MCF 10A (cell line): ENCODE measurements at regions of chr1 and their contacts with region 1.

Region 1: DNA sequence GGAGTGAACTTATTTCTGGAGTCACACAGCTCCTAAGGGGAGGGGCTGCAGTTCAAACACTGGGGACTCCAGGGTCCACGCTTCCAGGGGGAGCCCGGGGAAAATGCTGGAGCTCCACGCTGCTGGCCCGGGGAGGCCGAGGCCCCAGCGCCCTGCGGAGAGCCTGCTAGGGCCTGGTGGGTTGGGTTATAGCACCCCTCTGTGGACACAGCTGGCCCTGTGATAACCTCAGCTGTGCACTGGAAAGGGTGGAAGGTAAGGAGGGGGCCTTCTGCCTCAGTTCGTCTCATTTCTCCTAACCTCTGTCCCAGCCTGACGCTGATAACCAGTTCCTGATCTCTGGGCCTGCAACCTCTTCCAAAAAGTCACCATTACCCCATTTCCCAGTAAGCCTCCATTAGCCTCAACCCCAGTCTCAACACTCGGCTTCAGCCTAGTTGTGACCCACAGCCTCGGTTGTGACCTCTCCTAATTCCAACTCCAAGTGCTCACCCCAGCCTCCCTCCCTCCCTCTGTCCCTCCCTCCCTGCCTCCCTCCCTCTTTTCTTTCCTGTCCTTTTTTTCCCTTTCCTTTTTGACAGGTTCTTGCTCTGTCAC is 7.1 kb downstream of the NBL1 start:
- DNase-seq: no peak
- H3K4me3 Mint-ChIP-seq: no peak overlapping the region
- H3K27ac Mint-ChIP-seq: peak overlapping the region; percentile 75
- H3K4me1 Mint-ChIP-seq: peaks cover 50% of the 10 kb centered on the region
- H3K27me3 Mint-ChIP-seq: no peaks in the 10 kb centered on the region
- CTCF ChIP-seq: peak; percentile 50

Region 2: DNA sequence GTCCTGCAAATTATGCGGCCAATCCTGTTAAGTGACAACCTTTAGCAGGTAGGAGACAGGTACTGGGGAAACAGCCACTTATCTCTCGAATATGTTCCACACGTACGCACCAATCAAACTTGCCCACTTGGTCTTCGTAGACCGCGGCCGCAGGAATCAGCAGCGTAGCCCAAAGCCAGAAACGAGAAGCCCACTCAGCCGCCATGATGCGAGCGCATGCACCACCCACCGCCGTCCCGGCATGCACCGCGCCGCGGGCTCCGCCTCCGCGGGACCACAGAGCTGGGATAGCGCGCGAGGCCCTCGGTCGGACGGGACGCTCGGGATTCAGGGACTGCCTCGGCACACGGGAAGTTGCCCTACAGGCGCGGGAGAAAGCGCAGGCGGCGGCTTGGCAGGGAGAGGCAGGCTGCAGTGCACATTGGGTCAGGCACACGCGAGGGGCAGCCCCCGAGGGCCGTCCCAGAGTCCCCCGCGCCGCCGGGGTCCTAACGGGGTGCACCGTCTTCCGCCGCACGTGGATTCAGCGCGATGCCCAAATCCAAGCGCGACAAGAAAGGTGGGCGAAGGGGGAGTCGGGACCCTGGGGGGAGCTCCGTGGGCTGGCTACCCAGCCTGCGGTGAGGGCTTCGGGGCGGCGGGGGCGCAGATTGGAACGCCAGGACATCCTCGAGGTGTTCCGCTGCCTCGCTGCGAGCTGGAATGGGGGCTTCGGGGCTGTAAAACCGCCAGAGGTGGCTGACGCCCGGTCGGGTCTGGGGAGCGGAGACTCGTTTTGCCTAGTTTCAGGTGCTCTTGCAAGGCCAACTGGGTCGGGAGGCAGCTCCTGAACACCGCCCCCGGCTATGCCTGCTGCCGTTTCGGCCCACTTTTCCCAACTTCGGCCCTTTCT is 399.7 kb before region 1 on chr1 and contains the starts of genes EMC1 and MRTO4:
- CTCF ChIA-PET with region 1: no interaction called
- POLR2A ChIA-PET with region 1: interaction called, 3 read pairs
- intact Hi-C with region 1: loop called (anchors 2 kb)
- DNase-seq: peak; percentile 81
- H3K4me3 Mint-ChIP-seq: peak within 1 kb of the TSS; percentile 95
- H3K27ac Mint-ChIP-seq: peak within 1 kb of the TSS; percentile 85
- H3K4me1 Mint-ChIP-seq: peaks cover 11% of the 10 kb centered on the region
- H3K27me3 Mint-ChIP-seq: no peaks in the 10 kb centered on the region
- CTCF ChIP-seq: no peak
- total RNA-seq, gene EMC1: 75.9 and 77.2 TPM in 2 replicates
- total RNA-seq, gene MRTO4: 37.3 and 46.0 TPM in 2 replicates

Region 3: DNA sequence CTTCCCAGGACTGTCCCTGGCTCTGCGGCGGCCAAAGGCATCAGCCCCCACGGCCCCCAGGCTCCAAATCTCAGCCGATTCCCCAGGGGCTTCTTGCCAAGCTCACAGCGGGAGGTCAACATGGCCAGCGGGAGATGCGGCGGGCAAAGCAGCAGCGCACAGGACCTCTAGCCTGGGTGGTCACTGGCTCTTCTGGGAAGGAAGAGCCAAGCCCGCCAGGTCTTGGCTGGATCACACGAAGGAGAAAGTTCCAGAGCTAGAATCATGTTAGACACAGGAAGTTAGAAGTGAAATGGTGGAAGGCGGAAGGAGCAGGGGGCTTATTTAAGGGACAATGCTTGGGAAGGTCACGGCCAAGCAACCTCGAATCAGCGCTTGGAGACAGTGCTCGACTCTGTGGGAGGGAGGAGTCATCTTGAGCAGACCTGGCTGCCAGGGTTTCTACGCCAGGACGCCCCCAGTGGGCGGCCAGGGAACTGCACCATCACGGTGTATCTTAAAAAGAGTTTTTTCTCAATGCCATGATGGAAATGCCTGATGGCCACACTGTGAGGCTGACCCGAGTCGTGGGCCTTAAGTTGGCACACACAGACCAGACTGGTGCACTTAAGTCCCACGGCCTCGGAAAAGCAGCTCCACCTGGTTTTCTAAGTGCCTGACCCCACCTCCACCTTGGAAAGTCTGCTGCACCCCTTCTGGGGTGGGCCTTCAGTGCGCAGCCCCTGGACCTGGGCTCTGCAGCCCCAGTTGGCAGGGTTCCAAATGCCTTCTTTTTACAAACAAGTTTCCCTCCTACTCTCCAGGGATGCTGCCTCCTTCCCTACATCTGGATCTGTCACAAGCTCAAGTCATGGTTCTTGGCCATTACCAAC is 309.8 kb before region 1 on chr1:
- CTCF ChIA-PET with region 1: interaction called, 7 read pairs
- POLR2A ChIA-PET with region 1: no interaction called
- intact Hi-C with region 1: loop called (anchors 2 kb)
- DNase-seq: peak; percentile 67
- H3K4me3 Mint-ChIP-seq: no peak overlapping the region
- H3K27ac Mint-ChIP-seq: no peak overlapping the region
- H3K4me1 Mint-ChIP-seq: peaks cover 4% of the 10 kb centered on the region
- H3K27me3 Mint-ChIP-seq: no peaks in the 10 kb centered on the region
- CTCF ChIP-seq: peak; percentile 82

Region 4: GRCh38 chr1:19390901-19391595 is 260.2 kb before region 1 on chr1:
- CTCF ChIA-PET with region 1: interaction called, 25 read pairs
- POLR2A ChIA-PET with region 1: no interaction called
- intact Hi-C with region 1: loop called (anchors 1 kb)
- DNase-seq: peak; percentile 43
- H3K4me3 Mint-ChIP-seq: no peak overlapping the region
- H3K27ac Mint-ChIP-seq: no peak overlapping the region
- H3K4me1 Mint-ChIP-seq: peaks cover 26% of the 10 kb centered on the region
- H3K27me3 Mint-ChIP-seq: no peaks in the 10 kb centered on the region
- CTCF ChIP-seq: peak; percentile 75

Region 5: DNA sequence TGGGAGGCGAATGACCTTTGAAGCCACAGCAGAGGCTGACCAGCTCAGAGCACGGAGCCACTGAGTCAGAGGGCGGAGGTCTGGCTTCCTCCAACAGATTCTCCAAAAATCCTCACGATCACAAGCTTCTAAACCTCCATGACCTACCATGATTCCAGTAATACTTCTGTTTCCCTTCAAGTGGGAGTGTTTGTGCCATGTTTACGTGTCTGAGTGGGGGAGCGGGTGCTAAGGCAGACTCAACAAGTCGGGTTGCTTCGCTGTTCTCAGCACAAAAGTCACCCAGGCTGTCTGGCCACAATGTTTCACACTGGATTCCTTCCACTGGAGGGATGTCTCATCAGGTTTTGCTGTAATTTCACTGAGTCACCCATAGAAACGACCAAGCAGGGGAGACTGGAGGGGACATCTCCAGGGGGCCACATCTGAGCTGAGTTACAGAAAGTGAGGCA is 252.9 kb before region 1 on chr1:
- CTCF ChIA-PET with region 1: interaction called, 25 read pairs
- POLR2A ChIA-PET with region 1: no interaction called
- intact Hi-C with region 1: no loop called
- DNase-seq: peak; percentile 29
- H3K4me3 Mint-ChIP-seq: no peak overlapping the region
- H3K27ac Mint-ChIP-seq: no peak overlapping the region
- H3K4me1 Mint-ChIP-seq: peaks cover 21% of the 10 kb centered on the region
- H3K27me3 Mint-ChIP-seq: no peaks in the 10 kb centered on the region
- CTCF ChIP-seq: no peak

Region 6: DNA sequence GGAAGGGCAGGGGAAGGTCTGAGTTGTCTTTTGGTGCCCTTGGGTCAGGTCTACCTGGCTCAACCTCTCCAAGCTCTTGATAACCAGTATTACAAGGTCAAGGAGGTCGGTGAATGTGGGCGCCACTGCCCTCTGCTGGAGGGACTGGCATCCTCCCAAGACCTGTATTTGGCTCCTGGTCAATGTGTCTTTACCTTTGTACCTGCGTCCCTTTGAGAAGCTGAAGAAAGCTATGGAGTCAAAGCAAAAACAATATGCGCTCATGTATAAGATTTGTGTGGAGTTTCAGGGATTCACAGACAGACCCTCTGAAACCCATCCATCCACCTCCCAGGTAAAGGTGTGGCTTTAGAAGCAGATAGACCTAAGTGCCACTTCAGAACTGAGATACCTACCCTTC is 68.9 kb before region 1 on chr1:
- CTCF ChIA-PET with region 1: interaction called, 3 read pairs
- POLR2A ChIA-PET with region 1: no interaction called
- intact Hi-C with region 1: loop called (anchors 5 kb)
- DNase-seq: peak; percentile 71
- H3K4me3 Mint-ChIP-seq: no peak overlapping the region
- H3K27ac Mint-ChIP-seq: no peak overlapping the region
- H3K4me1 Mint-ChIP-seq: no peaks in the 10 kb centered on the region
- H3K27me3 Mint-ChIP-seq: peaks cover 16% of the 10 kb centered on the region
- CTCF ChIP-seq: peak; percentile 57